CD8-positive, alpha-beta T cell (primary cell): ENCODE measurements at regions of chr20 and their contacts with region 1.

Region 1: GRCh38 chr20:63641792-63642544 is 11.3 kb downstream of the STMN3 start:
- DNase-seq: peak; percentile 96 to 99 (median 97)
- ATAC-seq: peak; percentile 67
- H3K4me3 ChIP-seq: peak overlapping the region; percentile 90 to 98
- H3K4me3 Mint-ChIP-seq: peak overlapping the region; percentile 83
- H3K27ac ChIP-seq: peak overlapping the region; percentile 83 to 94
- H3K27ac Mint-ChIP-seq: peak overlapping the region; percentile 37
- H3K4me1 ChIP-seq: peaks cover 27% of the 10 kb centered on the region
- H3K4me1 Mint-ChIP-seq: peaks cover 24% of the 10 kb centered on the region
- H3K27me3 ChIP-seq: no peaks in the 10 kb centered on the region
- H3K27me3 Mint-ChIP-seq: no peaks in the 10 kb centered on the region
- CTCF ChIP-seq: peak; percentile 53

Region 2: GRCh38 chr20:63553227-63553932 is 88.6 kb before region 1 on chr20:
- CTCF ChIA-PET with region 1: interaction called, 6 read pairs
- POLR2A ChIA-PET with region 1: interaction called, 4 read pairs
- intact Hi-C with region 1: loop called (anchors 1 to 5 kb)
- DNase-seq: peak; percentile 76 to 93 (median 87)
- ATAC-seq: peak; percentile 81
- H3K4me3 ChIP-seq: peak overlapping the region; percentile 51 to 55
- H3K4me3 Mint-ChIP-seq: peak overlapping the region; percentile 70
- H3K27ac ChIP-seq: peak overlapping the region; percentile 17 to 61
- H3K27ac Mint-ChIP-seq: peak overlapping the region; percentile 89
- H3K4me1 ChIP-seq: peaks cover 19% of the 10 kb centered on the region
- H3K4me1 Mint-ChIP-seq: peaks cover 20% of the 10 kb centered on the region
- H3K27me3 ChIP-seq: peaks cover 0 to 2% of the 10 kb centered on the region in 2 experiments
- H3K27me3 Mint-ChIP-seq: peaks cover 4% of the 10 kb centered on the region
- CTCF ChIP-seq: no peak

Region 3: DNA sequence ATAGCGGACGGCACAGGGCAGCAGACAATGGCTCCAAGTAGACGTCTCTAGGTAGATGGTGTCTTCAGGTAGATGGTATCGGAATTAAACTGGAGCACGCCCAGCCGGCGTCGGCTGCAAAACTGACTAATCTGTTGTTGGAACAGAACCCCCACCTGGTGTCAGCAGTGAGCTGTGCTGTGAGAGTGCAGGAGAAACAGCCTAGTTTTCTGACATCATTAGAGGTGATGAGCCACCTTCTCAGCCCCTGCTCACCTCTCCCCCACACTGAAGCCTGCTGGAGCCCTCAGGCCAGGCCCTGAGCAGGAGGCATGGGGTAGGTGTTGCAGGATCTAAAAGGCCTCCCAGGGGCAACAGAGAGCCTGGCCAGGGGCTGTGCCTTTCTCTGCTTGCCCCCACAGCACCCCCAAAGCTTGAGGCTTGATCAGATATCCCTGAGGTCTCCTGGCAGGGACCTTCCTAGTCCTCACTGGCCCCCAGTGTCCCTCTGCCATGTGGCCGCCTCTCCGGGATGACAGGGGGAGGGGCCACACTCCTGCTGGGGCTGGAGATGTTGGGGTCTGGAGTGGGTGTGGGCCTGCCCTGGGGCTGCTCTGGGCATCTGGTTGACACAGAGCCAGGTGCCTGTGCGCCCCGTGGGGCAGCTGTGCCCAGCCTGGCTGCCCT is 61.0 kb before region 1 on chr20:
- CTCF ChIA-PET with region 1: interaction called, 7 read pairs
- POLR2A ChIA-PET with region 1: no interaction called
- intact Hi-C with region 1: loop called (anchors 1 kb)
- DNase-seq: peak; percentile 58 to 84 (median 77)
- ATAC-seq: peak; percentile 99
- H3K4me3 ChIP-seq: no peak overlapping the region
- H3K4me3 Mint-ChIP-seq: no peak overlapping the region
- H3K27ac ChIP-seq: no peak overlapping the region
- H3K27ac Mint-ChIP-seq: no peak overlapping the region
- H3K4me1 ChIP-seq: peaks cover 5% of the 10 kb centered on the region
- H3K4me1 Mint-ChIP-seq: peaks cover 3% of the 10 kb centered on the region
- H3K27me3 ChIP-seq: no peaks in the 10 kb centered on the region
- H3K27me3 Mint-ChIP-seq: no peaks in the 10 kb centered on the region
- CTCF ChIP-seq: peak; percentile 64

Region 4: GRCh38 chr20:63612276-63612928 is 29.6 kb before region 1 on chr20:
- CTCF ChIA-PET with region 1: interaction called, 23 read pairs
- POLR2A ChIA-PET with region 1: interaction called, 4 read pairs
- intact Hi-C with region 1: loop called in 1 of 2 experiments (anchors 1 kb)
- DNase-seq: no peak
- ATAC-seq: no peak
- H3K4me3 ChIP-seq: no peak overlapping the region
- H3K4me3 Mint-ChIP-seq: no peak overlapping the region
- H3K27ac ChIP-seq: no peak overlapping the region
- H3K27ac Mint-ChIP-seq: no peak overlapping the region
- H3K4me1 ChIP-seq: no peaks in the 10 kb centered on the region
- H3K4me1 Mint-ChIP-seq: peaks cover 9% of the 10 kb centered on the region
- H3K27me3 ChIP-seq: no peaks in the 10 kb centered on the region
- H3K27me3 Mint-ChIP-seq: no peaks in the 10 kb centered on the region
- CTCF ChIP-seq: no peak

Region 5: GRCh38 chr20:63627129-63627750 is 14.7 kb before region 1 on chr20:
- CTCF ChIA-PET with region 1: interaction called, 11 read pairs
- POLR2A ChIA-PET with region 1: interaction called, 150 read pairs
- intact Hi-C with region 1: loop called (anchors 1 kb)
- DNase-seq: peak; percentile 90 to 97 (median 94)
- ATAC-seq: peak; percentile 77
- H3K4me3 ChIP-seq: peak overlapping the region; percentile 91 to 100
- H3K4me3 Mint-ChIP-seq: peak overlapping the region; percentile 97
- H3K27ac ChIP-seq: peak overlapping the region; percentile 81 to 91
- H3K27ac Mint-ChIP-seq: peak overlapping the region; percentile 93
- H3K4me1 ChIP-seq: peaks cover 39% of the 10 kb centered on the region
- H3K4me1 Mint-ChIP-seq: peaks cover 43% of the 10 kb centered on the region
- H3K27me3 ChIP-seq: no peaks in the 10 kb centered on the region
- H3K27me3 Mint-ChIP-seq: no peaks in the 10 kb centered on the region
- CTCF ChIP-seq: no peak

Region 6: GRCh38 chr20:63652168-63653077 is 10.5 kb after region 1 on chr20:
- CTCF ChIA-PET with region 1: interaction called, 13 read pairs
- POLR2A ChIA-PET with region 1: interaction called, 23 read pairs
- intact Hi-C with region 1: loop called in 1 of 2 experiments (anchors 1 kb)
- DNase-seq: peak in 6 of 9 experiments; percentile 47 to 71 (median 58)
- ATAC-seq: peak; percentile 57
- H3K4me3 ChIP-seq: peak overlapping the region; percentile 57 to 72
- H3K4me3 Mint-ChIP-seq: peak overlapping the region; percentile 91
- H3K27ac ChIP-seq: peak overlapping the region in 1 of 2 experiments; percentile 6
- H3K27ac Mint-ChIP-seq: peak overlapping the region; percentile 27
- H3K4me1 ChIP-seq: peaks cover 33% of the 10 kb centered on the region
- H3K4me1 Mint-ChIP-seq: peaks cover 34% of the 10 kb centered on the region
- H3K27me3 ChIP-seq: no peaks in the 10 kb centered on the region
- H3K27me3 Mint-ChIP-seq: no peaks in the 10 kb centered on the region
- CTCF ChIP-seq: no peak

Region 7: GRCh38 chr20:63673951-63674350 is 32.0 kb after region 1 on chr20:
- CTCF ChIA-PET with region 1: no interaction called
- POLR2A ChIA-PET with region 1: no interaction called
- intact Hi-C with region 1: no loop called
- DNase-seq: no peak
- ATAC-seq: no peak
- H3K4me3 ChIP-seq: no peak overlapping the region
- H3K4me3 Mint-ChIP-seq: no peak overlapping the region
- H3K27ac ChIP-seq: no peak overlapping the region
- H3K27ac Mint-ChIP-seq: no peak overlapping the region
- H3K4me1 ChIP-seq: no peaks in the 10 kb centered on the region
- H3K4me1 Mint-ChIP-seq: no peaks in the 10 kb centered on the region
- H3K27me3 ChIP-seq: no peaks in the 10 kb centered on the region
- H3K27me3 Mint-ChIP-seq: no peaks in the 10 kb centered on the region
- CTCF ChIP-seq: no peak